Motor neuron (in vitro differentiated cells): ENCODE measurements at regions of chr2 and their contacts with region 1.

Region 1: GRCh38 chr2:172102391-172103278 is at the start of gene DLX2:
- ATAC-seq: peak; percentile 55 to 85 (median 78)
- H3K4me3 ChIP-seq: peak within 1 kb of the TSS; percentile 39 to 51 (median 44)
- H3K27ac ChIP-seq: no peak within 1 kb of the TSS
- H3K4me1 ChIP-seq: peaks cover 3 to 14% of the 10 kb centered on the region in 2 donors
- total RNA-seq, gene DLX2: 0.05 to 19.2 (median 0.32) TPM

Region 2: DNA sequence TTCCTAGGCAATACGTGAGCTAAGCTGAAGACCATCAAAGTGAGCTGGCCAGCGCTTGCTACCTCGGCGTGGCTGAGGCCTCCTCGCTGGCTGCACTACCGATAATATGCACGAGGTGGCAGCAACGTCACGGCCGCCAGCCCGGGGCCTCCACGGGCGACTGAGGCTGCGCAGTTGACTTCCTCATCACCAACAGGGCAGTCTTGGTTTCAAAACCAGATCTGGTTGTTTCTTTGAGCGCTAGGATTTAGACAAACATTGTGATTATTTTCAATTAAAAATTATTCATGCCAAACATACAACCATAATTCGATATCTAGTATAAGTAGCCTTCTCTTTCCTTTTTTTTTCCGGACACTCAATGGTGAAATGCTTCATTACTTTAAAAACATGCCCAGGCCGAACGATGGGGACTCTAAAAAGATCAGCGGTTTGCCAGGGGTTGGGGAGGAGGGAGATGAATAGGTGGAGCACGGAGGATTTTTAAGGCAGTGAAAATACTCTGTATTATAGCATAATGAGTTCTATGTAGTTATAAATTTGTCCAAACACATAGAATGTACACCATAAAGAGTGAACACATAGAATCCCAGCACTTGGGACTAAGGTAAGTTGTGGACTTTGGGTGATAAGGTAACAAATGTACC is 528.4 kb before region 1 on chr2:
- in situ Hi-C with region 1: loop called in 4 of 9 experiments (anchors 25 kb)
- ATAC-seq: peak; percentile 71 to 95 (median 87)
- H3K4me3 ChIP-seq: no peak overlapping the region
- H3K27ac ChIP-seq: no peak overlapping the region
- H3K4me1 ChIP-seq: no peaks in the 10 kb centered on the region

Region 3: DNA sequence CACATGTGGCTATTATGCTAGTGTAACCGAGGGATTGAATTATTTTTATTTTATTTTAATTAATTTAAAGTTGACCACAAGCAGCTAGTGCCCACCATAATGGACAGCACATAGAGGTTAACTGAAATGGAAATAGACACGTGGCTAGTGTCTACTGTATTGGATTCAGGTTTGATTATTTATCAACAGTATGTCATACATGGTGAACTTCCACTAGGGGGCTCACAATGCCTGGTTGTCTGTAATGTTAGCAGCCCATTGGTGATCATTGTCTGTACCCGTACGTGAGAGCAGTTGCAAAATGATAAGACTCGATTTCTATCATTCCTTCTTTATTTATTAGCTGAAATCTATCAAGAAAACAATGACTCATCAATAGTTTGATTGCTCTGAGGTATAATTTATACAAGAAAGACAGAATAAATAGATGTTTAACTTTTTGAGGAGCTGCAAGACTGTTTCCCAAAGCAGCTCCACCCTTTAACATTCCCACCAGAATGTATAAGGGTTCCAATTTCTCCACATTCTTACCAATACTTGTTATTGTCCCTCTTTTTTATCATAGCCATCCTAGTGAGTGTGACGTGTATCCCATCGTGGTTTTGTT is 503.8 kb before region 1 on chr2:
- in situ Hi-C with region 1: loop called in 3 of 9 experiments (anchors 25 kb)
- ATAC-seq: peak; percentile 78 to 99 (median 86)
- H3K4me3 ChIP-seq: no peak overlapping the region
- H3K27ac ChIP-seq: no peak overlapping the region
- H3K4me1 ChIP-seq: peaks cover 0 to 2% of the 10 kb centered on the region in 2 donors

Region 4: GRCh38 chr2:171703574-171704347 is 398.9 kb before region 1 on chr2:
- in situ Hi-C with region 1: loop called in 4 of 9 experiments (anchors 10 to 25 kb)
- ATAC-seq: peak in 3 of 8 experiments; percentile 47 to 57 (median 54)
- H3K4me3 ChIP-seq: no peak overlapping the region
- H3K27ac ChIP-seq: no peak overlapping the region
- H3K4me1 ChIP-seq: no peaks in the 10 kb centered on the region

Region 5: DNA sequence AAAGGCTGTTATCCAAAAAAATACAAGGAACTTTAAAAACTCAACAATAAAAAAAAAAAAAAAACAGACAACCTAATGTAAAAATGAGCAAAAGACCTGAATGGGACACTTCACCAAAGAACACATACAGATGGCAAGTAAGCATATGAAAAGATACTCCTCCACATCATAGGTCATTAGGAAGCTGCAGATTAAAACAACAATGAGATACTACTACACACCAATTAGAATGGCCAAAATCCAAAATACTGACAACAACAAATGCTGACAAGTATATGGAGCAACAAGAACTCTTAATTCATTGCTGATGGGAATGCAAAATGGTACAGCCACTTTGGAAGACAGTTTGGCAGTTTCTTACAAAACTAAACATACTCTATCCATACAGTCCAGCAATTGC is 331.2 kb before region 1 on chr2:
- in situ Hi-C with region 1: no loop called
- ATAC-seq: no peak
- H3K4me3 ChIP-seq: no peak overlapping the region
- H3K27ac ChIP-seq: no peak overlapping the region
- H3K4me1 ChIP-seq: no peaks in the 10 kb centered on the region

Region 6: GRCh38 chr2:171811245-171811628 is 291.4 kb before region 1 on chr2:
- in situ Hi-C with region 1: loop called in 2 of 9 experiments (anchors 25 kb)
- ATAC-seq: peak in 3 of 8 experiments; percentile 64 to 78 (median 67)
- H3K4me3 ChIP-seq: no peak overlapping the region
- H3K27ac ChIP-seq: no peak overlapping the region
- H3K4me1 ChIP-seq: no peaks in the 10 kb centered on the region

Region 7: GRCh38 chr2:171939743-171940071 is 162.9 kb before region 1 on chr2:
- in situ Hi-C with region 1: loop called in 1 of 9 experiments (anchors 25 kb)
- ATAC-seq: no peak
- H3K4me3 ChIP-seq: no peak overlapping the region
- H3K27ac ChIP-seq: no peak overlapping the region
- H3K4me1 ChIP-seq: no peaks in the 10 kb centered on the region